AG04450 (cell line): ENCODE measurements at regions of chr16 and their contacts with region 1.

Region 1: GRCh38 chr16:30984669-30985400 is at the start of gene HSD3B7:
- DNase-seq: peak; percentile 44
- H3K4me3 ChIP-seq: peak within 1 kb of the TSS; percentile 53
- H3K27ac ChIP-seq: peak within 1 kb of the TSS; percentile 11
- H3K27me3 ChIP-seq: no peaks in the 10 kb centered on the region
- CTCF ChIP-seq: peak; percentile 90
- polyA plus RNA-seq, gene HSD3B7: 6.1 and 9.5 TPM in 2 replicates

Region 2: GRCh38 chr16:30659507-30660423 is 325.1 kb before region 1 on chr16:
- CTCF ChIA-PET with region 1: no interaction called
- POLR2A ChIA-PET with region 1: no interaction called
- DNase-seq: no peak
- H3K4me3 ChIP-seq: peak overlapping the region; percentile 95
- H3K27ac ChIP-seq: peak overlapping the region; percentile 75
- H3K27me3 ChIP-seq: no peaks in the 10 kb centered on the region
- CTCF ChIP-seq: peak; percentile 22; the same call in 1 of the 2 replicates

Region 3: DNA sequence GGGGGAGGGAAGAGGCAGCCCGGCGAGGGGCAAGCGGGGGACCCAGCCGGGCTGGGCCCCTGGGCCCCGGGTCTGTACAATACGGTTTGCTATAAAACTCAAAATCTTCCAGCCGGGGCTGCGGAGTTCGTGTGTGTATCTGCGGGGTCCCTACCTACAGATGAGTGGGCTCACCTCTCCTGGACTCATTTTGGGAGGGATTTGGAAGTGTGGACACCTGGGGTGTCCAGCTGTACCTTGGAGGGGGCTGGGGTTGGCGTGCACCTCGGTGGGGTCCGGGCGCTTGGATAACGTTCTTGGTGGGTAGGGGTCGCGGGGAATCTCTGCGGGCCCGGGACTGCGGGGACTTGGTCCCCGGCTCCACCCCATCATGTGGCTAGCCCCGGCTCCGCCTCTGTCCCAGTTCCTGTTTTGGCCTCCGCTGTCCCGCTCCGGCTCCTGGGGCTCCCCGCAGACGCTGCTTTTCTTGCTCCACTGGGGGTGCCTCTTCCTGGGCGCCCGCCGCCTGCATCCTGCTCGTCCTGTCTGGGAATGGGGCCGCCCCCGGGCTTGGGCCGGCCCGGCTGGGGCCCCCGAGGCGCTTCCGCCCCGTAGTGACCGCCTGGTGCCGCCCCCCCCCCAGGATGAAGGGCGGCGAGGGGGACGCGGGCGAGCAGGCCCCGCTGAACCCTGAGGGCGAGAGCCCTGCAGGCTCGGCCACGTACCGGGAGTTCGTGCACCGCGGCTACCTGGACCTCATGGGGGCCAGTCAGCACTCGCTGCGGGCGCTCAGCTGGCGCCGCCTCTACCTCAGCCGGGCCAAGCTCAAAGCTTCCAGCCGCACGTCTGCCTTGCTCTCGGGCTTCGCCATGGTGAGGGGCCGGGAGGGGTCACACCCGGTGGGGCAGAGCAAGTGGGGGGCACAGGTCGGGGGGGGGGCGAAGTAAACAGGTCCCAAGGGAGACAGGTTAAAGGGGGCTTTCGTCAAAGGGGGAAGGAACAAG is 35.9 kb before region 1 on chr16 and contains the start of gene ORAI3:
- CTCF ChIA-PET with region 1: no interaction called
- POLR2A ChIA-PET with region 1: no interaction called
- DNase-seq: no peak
- H3K4me3 ChIP-seq: peak within 1 kb of the TSS; percentile 78
- H3K27ac ChIP-seq: peak within 1 kb of the TSS; percentile 52
- H3K27me3 ChIP-seq: no peaks in the 10 kb centered on the region
- CTCF ChIP-seq: no peak
- polyA plus RNA-seq, gene ORAI3: 23.7 and 29.5 TPM in 2 replicates

Region 4: GRCh38 chr16:31440516-31441184 is 455.8 kb after region 1 on chr16:
- CTCF ChIA-PET with region 1: interaction called, 26 read pairs
- POLR2A ChIA-PET with region 1: interaction called, 6 read pairs
- DNase-seq: no peak
- H3K4me3 ChIP-seq: no peak overlapping the region
- H3K27ac ChIP-seq: no peak overlapping the region
- H3K27me3 ChIP-seq: peaks cover 2% of the 10 kb centered on the region
- CTCF ChIP-seq: no peak